GM18951 (cell line): ENCODE measurements at regions of chr11 and their contacts with region 1.

Region 1: GRCh38 chr11:113730887-113731726 is 25.0 kb upstream of the TMPRSS5 start:
- POLR2A ChIP-seq: no peak

Region 2: GRCh38 chr11:113314389-113315301 is 416.5 kb before region 1 on chr11 and contains the start of gene TTC12:
- in situ Hi-C with region 1: loop called (anchors 25 kb)
- POLR2A ChIP-seq: peak; percentile 78

Region 3: DNA sequence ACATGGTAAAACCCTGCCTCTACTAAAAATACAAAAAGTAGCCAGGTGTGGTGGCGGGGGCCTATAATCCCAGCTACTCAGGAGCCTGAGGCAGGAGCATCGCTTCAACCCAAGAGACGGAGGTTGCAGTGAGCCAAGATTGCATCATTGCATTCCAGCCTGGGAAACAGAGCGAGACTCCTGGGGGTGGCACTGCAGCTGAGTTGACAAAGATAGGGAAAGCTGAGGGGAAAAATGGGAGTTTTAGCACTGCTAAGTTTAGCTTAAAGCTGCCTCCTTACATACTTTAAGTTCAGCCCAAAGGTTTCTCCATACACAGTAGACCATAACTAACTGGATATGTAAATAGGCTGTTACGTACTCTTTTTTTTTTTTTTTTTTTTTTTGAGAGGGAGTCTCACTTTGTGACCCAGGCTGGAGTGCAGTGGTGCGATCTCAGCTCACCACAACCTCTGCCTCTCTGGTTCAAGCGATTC is 153.3 kb after region 1 on chr11:
- in situ Hi-C with region 1: no loop called
- POLR2A ChIP-seq: no peak